Cardiac septum (tissue), 1 donor: ENCODE measurements at regions of chr19 and their contacts with region 1.

Region 1: GRCh38 chr19:46736544-46737297 is 9.1 kb upstream of the FKRP start:
- DNase-seq: no peak

Region 2: DNA sequence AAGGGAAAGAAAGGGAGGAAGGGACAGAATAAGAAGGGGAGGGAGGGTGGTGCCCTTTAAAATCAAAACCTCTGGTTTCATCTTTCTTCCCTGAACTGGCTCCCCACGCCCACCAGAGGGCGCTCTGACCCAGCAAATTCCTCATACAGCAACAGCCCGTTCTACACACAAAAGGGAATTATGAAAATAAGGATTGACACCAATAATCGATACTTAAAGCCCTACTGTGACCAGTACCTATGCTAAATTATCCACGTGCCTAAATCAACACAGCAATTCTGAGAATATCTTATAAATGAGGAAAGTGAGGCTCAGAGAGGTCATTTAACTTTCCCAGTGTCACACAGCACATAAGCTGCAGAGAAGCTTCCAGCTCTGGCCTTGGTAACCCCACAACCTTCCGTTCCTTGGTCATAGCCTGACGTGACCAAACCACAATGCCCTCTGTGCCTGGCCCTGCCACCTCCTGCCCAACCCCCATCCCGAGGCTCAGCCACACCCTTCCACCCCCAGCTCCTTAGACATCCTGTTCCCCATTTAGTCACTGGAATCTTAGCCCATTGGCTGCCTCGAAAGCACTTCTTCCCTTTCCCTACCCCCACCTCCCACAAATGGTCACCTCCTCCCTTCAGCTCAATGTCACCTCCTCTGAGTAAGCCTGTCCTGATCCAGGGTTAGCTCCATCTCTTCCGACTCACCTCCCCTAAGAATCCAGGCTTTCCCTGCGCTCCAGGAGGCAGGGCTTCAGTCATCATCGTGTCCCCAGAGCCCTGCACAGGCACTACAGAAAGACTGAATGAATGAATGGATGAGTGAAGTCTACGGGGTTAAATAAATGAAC is 206.9 kb before region 1 on chr19:
- intact Hi-C with region 1: no loop called
- DNase-seq: no peak

Region 3: DNA sequence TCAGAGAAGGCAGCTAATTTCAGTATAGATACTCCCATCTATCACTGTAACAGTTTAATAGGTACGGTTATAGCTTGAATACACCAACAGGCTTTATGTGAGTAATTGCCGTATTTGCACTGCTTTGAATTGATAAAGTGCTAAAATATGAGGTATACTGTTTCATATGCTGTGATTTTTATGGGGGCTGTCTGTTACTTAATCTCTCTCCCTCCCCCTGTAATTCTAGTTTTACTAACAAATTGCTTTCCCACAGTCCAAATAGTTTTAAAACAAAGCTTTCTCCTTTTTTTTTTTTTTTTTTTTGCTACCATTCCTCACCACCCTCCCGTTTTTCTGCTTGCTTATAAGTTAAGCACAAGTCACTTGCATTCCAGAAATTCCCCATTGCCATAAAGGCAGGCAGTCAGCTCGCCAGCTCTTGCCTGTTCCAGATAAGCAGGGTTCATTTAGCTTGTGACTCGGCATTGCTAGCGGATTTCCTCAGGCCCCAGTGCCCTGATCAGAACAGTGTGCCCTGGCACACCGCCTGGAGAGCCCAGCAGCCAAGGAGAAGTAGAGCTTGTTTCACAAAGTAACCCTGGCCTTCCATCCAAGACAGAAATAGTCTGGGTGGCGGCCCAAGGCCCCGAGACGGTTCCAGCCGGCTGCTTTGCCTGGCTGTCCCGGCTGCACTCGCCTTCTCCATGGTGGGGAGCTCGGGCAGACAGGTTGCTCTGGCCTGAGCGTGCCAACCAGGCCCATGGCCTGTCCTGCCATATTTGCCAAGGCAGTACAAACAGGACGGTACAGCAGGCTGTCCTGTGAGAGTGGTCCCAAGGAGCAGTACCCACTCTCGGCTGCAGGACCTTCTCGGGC is 239.4 kb after region 1 on chr19:
- intact Hi-C with region 1: loop called (anchors 5 kb)
- DNase-seq: peak; percentile 92